ENCODE measurements at regions of chr19 and their contacts with region 1.

Region 1: GRCh38 chr19:53520550-53521372 is 17.2 kb upstream of the ZNF331 start:
- DNase-seq: peak; percentile 93
- ATAC-seq: peak; percentile 99
- H3K4me3 Mint-ChIP-seq: peak overlapping the region; percentile 100
- H3K27ac Mint-ChIP-seq: peak overlapping the region; percentile 89
- H3K4me1 Mint-ChIP-seq: peaks cover 15% of the 10 kb centered on the region
- H3K27me3 Mint-ChIP-seq: no peaks in the 10 kb centered on the region

Region 2: GRCh38 chr19:52993323-52994178 is 527.2 kb before region 1 on chr19:
- CTCF ChIA-PET with region 1: no interaction called
- POLR2A ChIA-PET with region 1: no interaction called
- intact Hi-C with region 1: loop called in 1 of 2 experiments (anchors 5 kb)
- DNase-seq: peak; percentile 88
- ATAC-seq: peak; percentile 88
- H3K4me3 Mint-ChIP-seq: peak overlapping the region; percentile 72
- H3K27ac Mint-ChIP-seq: no peak overlapping the region
- H3K4me1 Mint-ChIP-seq: peaks cover 15% of the 10 kb centered on the region
- H3K27me3 Mint-ChIP-seq: peaks cover 9% of the 10 kb centered on the region

Region 3: GRCh38 chr19:53333463-53334449 is 187.0 kb before region 1 on chr19 and contains the start of gene ZNF845:
- CTCF ChIA-PET with region 1: no interaction called
- POLR2A ChIA-PET with region 1: no interaction called
- intact Hi-C with region 1: loop called in 1 of 2 experiments (anchors 1 kb)
- DNase-seq: peak; percentile 97
- ATAC-seq: peak; percentile 99
- H3K4me3 Mint-ChIP-seq: peak within 1 kb of the TSS; percentile 88
- H3K27ac Mint-ChIP-seq: peak within 1 kb of the TSS; percentile 92
- H3K4me1 Mint-ChIP-seq: peaks cover 10% of the 10 kb centered on the region
- H3K27me3 Mint-ChIP-seq: peaks cover 5% of the 10 kb centered on the region
- total RNA-seq, gene ZNF845: 5.9 to 6.3 TPM

Region 4: GRCh38 chr19:53431399-53432087 is 89.2 kb before region 1 on chr19 and contains the start of gene ZNF761:
- CTCF ChIA-PET with region 1: no interaction called
- POLR2A ChIA-PET with region 1: no interaction called
- intact Hi-C with region 1: loop called in 1 of 2 experiments (anchors 1 kb)
- DNase-seq: peak; percentile 98
- ATAC-seq: peak; percentile 99
- H3K4me3 Mint-ChIP-seq: peak within 1 kb of the TSS; percentile 94
- H3K27ac Mint-ChIP-seq: peak within 1 kb of the TSS; percentile 83
- H3K4me1 Mint-ChIP-seq: peaks cover 26% of the 10 kb centered on the region
- H3K27me3 Mint-ChIP-seq: no peaks in the 10 kb centered on the region
- total RNA-seq, gene ZNF761: 10.5 to 11.4 TPM

Region 5: DNA sequence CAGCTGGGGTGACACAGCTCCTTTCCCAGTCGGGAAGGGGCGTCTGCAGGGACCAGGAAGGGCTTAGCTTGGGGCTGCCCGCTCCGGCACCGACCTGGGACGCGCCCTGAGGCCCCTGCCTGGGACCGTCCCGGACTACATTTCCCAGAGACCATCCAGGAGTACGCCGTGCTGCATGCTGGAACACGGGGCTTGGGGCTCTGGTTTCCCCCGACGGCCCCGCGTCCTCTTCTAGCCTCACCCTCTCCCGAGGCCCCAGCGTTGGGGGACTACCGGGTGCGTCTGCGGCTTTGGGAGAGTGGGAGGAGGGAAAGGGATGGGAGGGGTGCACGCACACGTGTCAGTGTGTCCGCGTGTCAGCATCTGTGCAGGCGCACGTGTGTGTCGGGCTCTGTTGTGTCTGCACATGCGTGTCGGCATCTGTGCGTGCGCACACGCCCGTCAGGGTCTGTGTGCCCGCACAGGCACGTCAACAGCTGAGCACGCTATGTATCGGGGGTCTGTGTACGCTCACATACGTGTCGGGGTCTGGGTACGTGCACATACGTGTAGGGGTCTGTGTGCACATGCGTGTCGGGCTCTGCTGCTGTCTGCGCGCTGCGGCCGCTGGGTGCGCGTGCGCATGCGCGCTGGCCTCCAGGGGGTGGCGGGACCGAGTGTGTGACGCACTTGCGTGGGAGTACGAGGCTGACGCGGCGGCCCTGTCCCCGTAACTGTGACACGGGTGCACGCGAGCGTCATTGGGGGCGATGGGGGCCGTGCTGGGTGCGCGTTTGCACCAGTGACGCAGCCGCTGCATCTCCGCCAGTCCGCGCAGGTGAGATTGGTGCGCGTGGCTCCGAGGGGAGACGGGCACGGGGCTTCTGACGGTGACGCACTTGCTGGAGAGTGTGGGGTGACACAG is 17.0 kb after region 1 on chr19 and contains the start of gene ZNF331:
- CTCF ChIA-PET with region 1: interaction called, 3 read pairs
- POLR2A ChIA-PET with region 1: interaction called, 6 read pairs
- intact Hi-C with region 1: loop called (anchors 1 kb)
- DNase-seq: peak; percentile 93
- ATAC-seq: peak; percentile 77
- H3K4me3 Mint-ChIP-seq: peak within 1 kb of the TSS; percentile 95
- H3K27ac Mint-ChIP-seq: peak within 1 kb of the TSS; percentile 98
- H3K4me1 Mint-ChIP-seq: peaks cover 33% of the 10 kb centered on the region
- H3K27me3 Mint-ChIP-seq: no peaks in the 10 kb centered on the region
- total RNA-seq, gene ZNF331: 24.3 to 29.7 TPM

Measured in activated CD4-positive, alpha-beta T cell treated with anti-CD3 and anti-CD28 coated beads for 36 hours (primary cell).